ENCODE measurements at regions of chr4 and their contacts with region 1.

Region 1: GRCh38 chr4:6716018-6716911 is at the start of gene BLOC1S4:
- DNase-seq: peak; percentile 36 to 91
- H3K4me3 ChIP-seq: peak within 1 kb of the TSS; percentile 87 to 98
- H3K27ac ChIP-seq: peak within 1 kb of the TSS; percentile 88 to 95
- H3K4me1 ChIP-seq: peaks cover 4 to 14% of the 10 kb centered on the region in 2 donors
- H3K27me3 ChIP-seq: no peaks in the 10 kb centered on the region
- CTCF ChIP-seq: peak; percentile 21 to 31 (median 23)
- total RNA-seq, gene BLOC1S4: 37.5 TPM

Region 2: DNA sequence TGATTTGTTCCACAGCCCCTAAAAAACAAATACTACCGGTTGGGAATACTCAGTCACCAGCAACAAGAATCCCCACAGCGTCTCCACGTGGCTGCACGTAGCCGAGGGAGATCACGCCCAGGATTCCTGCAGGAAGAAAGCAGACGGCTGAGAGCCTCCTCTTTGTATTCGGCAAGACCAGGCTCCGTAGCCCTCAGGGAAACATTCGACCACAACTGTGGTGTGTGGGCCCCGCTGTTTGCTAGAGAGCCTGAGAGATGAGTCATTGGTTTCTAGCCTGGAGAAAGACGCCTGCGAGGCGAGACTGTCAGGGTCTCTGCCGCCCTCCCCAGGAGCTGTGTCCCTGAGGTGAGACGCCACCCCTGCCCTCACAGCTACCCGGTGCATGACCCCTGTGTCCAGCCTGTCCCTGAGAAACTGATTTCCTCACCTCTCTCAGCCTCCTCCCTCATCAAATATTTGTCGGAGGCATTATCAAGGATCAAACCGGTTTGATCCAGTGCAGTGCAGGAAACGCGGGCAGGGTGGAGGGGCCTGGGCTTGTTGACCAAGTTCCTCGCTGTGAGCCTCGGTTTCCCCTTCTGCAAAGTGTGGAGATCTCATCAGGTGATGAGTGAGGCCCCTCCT is 27.3 kb before region 1 on chr4:
- intact Hi-C with region 1: no loop called
- DNase-seq: peak in 1 of 2 donors; percentile 73
- H3K4me3 ChIP-seq: no peak overlapping the region
- H3K27ac ChIP-seq: no peak overlapping the region
- H3K4me1 ChIP-seq: no peaks in the 10 kb centered on the region
- H3K27me3 ChIP-seq: no peaks in the 10 kb centered on the region
- CTCF ChIP-seq: no peak

Region 3: DNA sequence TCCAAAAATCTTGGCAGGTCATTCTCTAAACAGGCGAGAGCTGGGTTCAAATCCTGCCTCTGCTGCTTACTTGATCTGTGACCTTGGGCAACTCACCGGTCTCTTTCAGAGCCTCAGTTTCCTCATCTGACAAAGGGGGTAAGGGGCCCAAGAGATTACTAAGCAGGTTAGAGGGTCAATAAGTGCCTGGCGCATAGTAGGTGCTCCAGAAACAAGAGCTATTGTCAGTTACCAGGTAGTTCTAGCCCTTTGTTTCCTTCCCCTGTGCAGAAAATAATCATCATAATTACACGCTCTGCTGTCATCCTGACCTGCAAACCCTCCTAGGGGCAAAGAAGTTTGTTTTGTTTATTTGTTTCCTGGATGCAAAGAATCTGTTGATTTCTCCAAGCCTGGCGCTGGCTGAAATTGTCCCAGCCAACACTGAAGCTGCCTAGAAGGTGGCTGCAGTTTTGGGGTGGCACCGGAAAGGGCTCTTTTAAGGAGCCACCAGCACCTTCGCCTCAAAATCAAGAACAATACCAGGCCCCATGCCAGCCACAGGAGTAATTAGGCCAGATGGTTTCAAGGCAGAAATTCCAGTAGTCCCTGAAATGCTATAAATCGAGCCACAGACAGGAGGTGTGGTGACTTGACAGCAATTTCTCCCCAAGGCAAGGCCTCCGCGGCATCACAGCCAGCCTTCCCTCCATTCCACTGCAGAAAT is 56.1 kb after region 1 on chr4:
- intact Hi-C with region 1: loop called (anchors 2 kb)
- DNase-seq: no peak
- H3K4me3 ChIP-seq: no peak overlapping the region
- H3K27ac ChIP-seq: peak overlapping the region; percentile 72 to 90
- H3K4me1 ChIP-seq: peaks cover 9 to 41% of the 10 kb centered on the region in 2 donors
- H3K27me3 ChIP-seq: no peaks in the 10 kb centered on the region
- CTCF ChIP-seq: no peak

Region 4: GRCh38 chr4:6806924-6807636 is 90.8 kb after region 1 on chr4:
- intact Hi-C with region 1: no loop called
- DNase-seq: no peak
- H3K4me3 ChIP-seq: no peak overlapping the region
- H3K27ac ChIP-seq: peak overlapping the region; percentile 17 to 41
- H3K4me1 ChIP-seq: peaks cover 0 to 19% of the 10 kb centered on the region in 2 donors
- H3K27me3 ChIP-seq: no peaks in the 10 kb centered on the region
- CTCF ChIP-seq: no peak

Region 5: GRCh38 chr4:6873792-6874461 is 157.7 kb after region 1 on chr4:
- intact Hi-C with region 1: loop called (anchors 1 kb)
- DNase-seq: peak in 1 of 2 donors; percentile 83
- H3K4me3 ChIP-seq: no peak overlapping the region
- H3K27ac ChIP-seq: no peak overlapping the region
- H3K4me1 ChIP-seq: no peaks in the 10 kb centered on the region
- H3K27me3 ChIP-seq: no peaks in the 10 kb centered on the region
- CTCF ChIP-seq: peak; percentile 79 to 84 (median 84)